Head of caudate nucleus (tissue), 42 donors: ENCODE measurements at regions of chr11 and their contacts with region 1.

Region 1: DNA sequence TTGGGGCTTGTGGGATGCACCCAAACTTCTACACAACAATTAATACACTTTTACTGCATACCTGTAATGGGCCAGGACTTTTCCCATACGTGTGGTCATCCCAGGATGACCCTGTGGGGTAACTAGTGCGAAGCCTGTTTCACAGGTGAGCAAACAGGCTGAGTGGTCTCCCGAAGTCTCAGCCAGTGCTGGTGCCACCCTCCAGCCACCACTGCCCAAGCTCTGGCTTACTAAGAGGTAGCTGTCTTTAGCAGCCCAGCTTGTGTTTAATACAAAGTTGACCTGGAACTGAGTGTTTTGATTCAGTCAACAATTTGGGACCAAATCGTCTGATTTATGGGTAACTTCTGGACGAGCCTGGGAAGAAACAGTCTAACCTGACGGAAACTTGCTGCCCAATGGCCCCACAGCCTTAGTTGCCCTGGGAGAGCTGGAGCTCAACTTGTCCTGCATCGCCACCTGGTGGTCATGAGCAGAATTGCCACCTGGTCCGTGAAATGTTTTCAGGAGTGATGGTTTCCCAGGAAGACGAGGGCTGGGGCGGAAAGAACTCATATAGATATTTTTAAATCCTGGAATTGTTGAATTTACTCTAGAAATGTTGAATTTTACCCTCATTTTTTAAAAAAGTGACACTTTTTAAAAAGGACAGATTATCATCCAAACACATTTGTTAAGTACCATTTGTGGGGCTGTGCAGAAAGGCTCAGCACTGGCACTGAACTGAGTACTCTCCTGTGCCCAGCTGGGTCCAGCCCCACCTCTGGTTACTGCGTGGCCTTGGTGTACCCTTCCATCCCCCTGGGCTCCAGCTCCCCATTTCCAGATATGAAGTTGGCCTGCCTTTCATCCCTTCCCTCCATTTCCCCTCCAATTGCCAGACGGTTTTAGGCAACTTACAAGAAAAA is 95.5 kb upstream of the PARVA start:
- DNase-seq: peak; percentile 52 to 97 (median 91)

Region 2: DNA sequence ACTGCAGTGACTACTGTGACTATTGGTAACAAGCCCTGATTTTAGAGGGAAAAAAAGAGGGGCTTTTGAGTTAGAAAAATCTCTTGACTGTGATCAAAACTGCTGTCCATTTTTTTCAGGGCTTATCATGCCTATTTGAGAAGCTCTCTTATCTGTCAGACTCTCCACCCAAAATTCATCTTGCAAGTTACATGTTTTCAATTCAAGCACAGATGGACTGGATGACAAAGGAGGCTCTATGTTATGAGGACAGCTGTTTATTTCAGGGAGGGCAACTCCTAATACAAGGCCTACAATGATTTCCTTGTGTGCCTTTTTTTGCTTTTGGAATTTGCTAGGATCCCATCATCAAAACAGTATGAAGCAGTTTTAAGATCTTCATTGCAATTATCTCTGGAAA is 475.2 kb before region 1 on chr11:
- intact Hi-C with region 1: loop called (anchors 10 kb)
- DNase-seq: peak in 9 of 42 donors; percentile 16 to 70 (median 39)

Region 3: GRCh38 chr11:11931461-11932055 is 350.3 kb before region 1 on chr11:
- intact Hi-C with region 1: loop called (anchors 10 kb)
- DNase-seq: peak in 11 of 42 donors; percentile 8 to 62 (median 26)